Cardiac septum (tissue), 1 donor: ENCODE measurements at regions of chr22 and their contacts with region 1.

Region 1: GRCh38 chr22:50030297-50031188 is 18.0 kb upstream of the IL17REL start:
- DNase-seq: peak; percentile 88

Region 2: DNA sequence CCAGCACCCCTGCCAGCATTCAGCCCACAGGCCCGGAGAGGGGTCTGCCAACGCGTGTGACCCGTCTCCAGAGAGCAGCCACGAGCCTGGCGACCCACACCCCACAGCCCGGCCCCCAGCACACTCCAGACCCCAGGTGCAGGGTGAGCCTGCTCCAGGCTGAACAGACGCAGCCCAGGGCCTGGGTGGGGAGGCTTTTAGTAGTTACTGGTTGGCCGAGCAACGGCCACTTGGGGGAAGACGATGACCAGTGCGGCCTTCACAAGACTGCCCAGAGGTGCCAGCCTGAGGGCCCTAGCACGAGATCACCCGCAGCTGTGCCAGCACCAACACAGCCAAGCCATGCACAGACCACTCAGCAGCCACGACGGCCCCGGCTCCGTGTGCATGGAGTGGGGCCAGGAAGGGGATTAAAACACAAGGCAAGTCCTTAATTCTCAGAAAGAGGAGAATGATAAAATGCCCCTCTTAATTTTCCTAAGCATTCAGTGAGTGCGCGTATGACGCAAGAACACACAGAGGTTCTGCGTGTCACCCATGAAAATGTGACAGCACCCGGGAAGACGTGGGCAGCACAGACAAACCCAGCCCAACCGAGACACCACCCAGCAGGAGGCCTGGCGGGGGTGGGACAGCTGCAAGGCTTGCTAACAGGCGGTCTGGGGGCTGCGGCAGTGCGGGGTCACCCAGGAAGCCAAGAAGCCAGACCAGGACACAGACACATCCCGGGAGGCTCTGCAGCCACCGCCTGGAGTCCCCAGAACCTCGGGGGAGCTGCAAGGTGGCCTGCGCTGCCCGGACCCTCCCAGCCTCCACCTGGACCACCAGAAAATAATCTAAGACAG is 250.5 kb before region 1 on chr22:
- intact Hi-C with region 1: loop called (anchors 5 kb)
- DNase-seq: no peak

Region 3: DNA sequence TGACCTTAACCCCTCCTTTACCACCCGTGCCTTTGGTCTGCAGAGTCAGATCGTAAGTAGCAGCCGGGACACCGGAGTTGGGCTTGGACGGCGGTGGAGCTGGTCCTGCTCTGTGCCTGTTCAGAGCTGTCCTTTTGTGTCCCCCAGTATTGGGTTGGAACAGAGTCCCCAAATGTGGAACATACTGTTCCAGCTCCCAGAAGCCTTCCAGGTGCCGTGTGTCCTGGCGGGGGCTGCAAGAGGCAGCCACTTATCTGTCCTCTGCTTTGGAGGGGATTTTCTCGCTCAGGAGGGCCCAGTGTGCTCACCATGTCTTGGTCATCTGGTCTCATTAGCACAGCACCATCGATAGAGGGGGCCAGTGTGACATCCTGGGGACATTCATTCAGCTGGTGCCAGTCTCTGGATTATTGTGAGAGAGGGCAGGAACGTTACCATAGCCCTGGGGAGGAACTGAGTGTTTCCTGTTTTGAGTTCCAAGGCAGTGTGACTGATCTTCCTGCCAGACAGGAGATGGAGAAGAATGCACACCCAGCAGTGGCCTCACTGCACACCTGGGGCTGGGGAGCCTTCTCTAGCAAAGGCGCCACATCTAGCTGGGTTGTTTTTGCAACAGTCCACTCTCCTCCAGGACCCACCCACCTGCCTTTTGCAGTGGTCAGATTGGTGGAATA is 99.7 kb before region 1 on chr22:
- intact Hi-C with region 1: loop called (anchors 1 kb)
- DNase-seq: peak; percentile 87

Region 4: DNA sequence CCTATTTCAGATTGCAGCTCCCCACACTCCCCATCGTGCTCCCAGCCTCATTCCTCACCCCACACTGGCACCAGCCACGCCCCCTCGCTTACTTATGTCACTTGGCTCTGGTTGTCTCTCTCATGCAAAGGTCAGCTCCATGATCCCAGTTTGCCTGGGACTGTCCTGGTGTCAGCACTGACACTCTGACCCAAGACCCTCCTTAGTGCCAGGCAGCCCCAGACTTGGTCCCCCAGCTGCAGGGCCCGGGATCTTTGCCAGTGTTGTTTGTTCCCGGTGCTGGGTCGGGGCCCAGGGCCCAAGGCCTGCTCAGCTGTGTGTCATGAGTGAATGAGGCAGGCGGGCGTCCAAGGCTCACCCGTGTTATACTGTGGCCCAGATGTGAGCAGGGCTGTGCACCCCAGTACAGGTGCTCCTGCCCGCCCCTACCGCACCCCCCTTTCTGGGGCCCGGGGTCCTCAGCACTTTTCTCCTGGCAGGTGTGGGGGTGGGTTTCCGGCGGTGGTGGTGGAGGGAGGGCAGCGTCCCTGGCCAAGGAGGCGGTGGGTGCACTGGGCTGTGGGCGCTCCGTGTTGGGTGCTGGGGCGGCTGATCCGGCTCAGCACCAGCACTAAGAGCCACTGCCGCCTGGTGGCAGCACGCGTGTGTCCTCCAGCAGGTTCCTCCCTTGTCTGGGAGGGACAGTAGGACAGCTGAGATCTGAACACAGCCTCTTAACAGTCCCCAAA is 37.5 kb before region 1 on chr22:
- intact Hi-C with region 1: loop called (anchors 5 kb)
- DNase-seq: peak; percentile 84